ENCODE measurements at regions of chr2 and their contacts with region 1.

Region 1: GRCh38 chr2:65483763-65484162 is 51.4 kb upstream of the SPRED2 start:
- DNase-seq: no peak
- ATAC-seq: no peak

Region 2: DNA sequence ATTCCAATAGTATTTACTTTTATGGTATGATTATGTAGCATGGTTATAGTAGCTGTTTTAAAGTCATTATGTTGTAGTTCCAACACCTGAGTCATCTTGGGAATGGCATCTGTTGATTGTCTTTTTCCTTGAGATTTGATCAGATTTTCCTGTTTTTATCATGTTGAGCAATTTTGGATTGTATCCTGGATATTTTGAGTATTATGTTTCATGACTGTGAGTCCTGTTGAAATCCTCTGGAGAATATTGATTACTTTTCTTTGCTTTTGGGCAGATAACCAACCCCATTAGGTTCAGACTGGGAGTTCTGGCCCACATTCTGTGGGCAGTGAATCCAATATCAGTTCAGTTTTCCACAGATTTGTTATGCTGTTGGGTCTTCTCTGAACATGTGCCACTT is 111.9 kb after region 1 on chr2:
- intact Hi-C with region 1: no loop called
- DNase-seq: no peak
- ATAC-seq: no peak

Region 3: GRCh38 chr2:65918760-65919187 is 435.0 kb after region 1 on chr2:
- intact Hi-C with region 1: loop called (anchors 10 kb)
- DNase-seq: no peak
- ATAC-seq: no peak